Psoas muscle (tissue), 8 donors: ENCODE measurements at regions of chr1 and their contacts with region 1.

Region 1: GRCh38 chr1:44835738-44836675 is 7.0 kb downstream of the PTCH2 start:
- DNase-seq: peak; percentile 83 to 90
- ATAC-seq: peak; percentile 79 to 89 (median 79)
- H3K4me3 ChIP-seq: no peak overlapping the region
- H3K27ac ChIP-seq: no peak overlapping the region
- H3K4me1 ChIP-seq: no peaks in the 10 kb centered on the region
- H3K27me3 ChIP-seq: no peaks in the 10 kb centered on the region
- CTCF ChIP-seq: peak; percentile 82

Region 2: DNA sequence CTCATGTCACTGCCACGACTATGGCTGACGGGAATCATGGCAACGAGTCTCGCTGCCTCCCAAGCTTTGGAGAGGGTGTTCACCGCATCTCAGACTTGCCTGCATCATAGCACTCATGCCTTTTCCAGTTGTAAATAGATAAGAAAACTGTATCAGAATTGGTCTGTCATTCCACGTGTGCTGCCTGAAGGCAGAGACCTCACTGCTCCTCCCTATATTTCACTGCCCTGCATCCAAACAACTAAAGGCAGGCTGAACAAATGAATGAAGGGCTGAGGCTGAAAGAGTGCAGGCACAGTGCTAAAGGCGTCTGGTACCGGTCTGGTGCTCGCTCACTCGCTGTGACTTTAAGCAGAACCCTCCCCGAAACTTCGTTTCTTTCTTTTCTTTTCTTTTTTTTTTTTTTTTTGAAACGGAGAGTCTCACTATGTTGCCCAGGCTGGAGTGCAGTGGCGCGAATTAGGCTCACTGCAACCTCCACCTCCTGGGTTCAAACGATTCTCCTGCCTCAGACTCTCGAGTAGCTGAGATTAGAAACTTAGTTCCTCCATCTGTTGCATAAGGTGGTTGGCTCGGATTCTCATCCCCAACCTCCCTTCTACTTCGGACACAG is 149.8 kb after region 1 on chr1:
- intact Hi-C with region 1: loop called in 1 of 2 experiments (anchors 5 kb)
- DNase-seq: no peak
- ATAC-seq: peak in 1 of 4 donors; percentile 10
- H3K4me3 ChIP-seq: peak overlapping the region; percentile 89
- H3K27ac ChIP-seq: peak overlapping the region; percentile 84
- H3K4me1 ChIP-seq: peaks cover 34% of the 10 kb centered on the region
- H3K27me3 ChIP-seq: no peaks in the 10 kb centered on the region
- CTCF ChIP-seq: no peak